Esophagus muscularis mucosa (tissue), 4 donors: ENCODE measurements at regions of chr22 and their contacts with region 1.

Region 1: GRCh38 chr22:23649071-23649501 is 17.0 kb upstream of the DRICH1 start:
- DNase-seq: no peak
- H3K4me3 ChIP-seq: no peak overlapping the region
- H3K27ac ChIP-seq: no peak overlapping the region
- H3K4me1 ChIP-seq: no peaks in the 10 kb centered on the region
- H3K27me3 ChIP-seq: no peaks in the 10 kb centered on the region
- CTCF ChIP-seq: no peak
- EP300 ChIP-seq: no peak
- POLR2A ChIP-seq: no peak

Region 2: DNA sequence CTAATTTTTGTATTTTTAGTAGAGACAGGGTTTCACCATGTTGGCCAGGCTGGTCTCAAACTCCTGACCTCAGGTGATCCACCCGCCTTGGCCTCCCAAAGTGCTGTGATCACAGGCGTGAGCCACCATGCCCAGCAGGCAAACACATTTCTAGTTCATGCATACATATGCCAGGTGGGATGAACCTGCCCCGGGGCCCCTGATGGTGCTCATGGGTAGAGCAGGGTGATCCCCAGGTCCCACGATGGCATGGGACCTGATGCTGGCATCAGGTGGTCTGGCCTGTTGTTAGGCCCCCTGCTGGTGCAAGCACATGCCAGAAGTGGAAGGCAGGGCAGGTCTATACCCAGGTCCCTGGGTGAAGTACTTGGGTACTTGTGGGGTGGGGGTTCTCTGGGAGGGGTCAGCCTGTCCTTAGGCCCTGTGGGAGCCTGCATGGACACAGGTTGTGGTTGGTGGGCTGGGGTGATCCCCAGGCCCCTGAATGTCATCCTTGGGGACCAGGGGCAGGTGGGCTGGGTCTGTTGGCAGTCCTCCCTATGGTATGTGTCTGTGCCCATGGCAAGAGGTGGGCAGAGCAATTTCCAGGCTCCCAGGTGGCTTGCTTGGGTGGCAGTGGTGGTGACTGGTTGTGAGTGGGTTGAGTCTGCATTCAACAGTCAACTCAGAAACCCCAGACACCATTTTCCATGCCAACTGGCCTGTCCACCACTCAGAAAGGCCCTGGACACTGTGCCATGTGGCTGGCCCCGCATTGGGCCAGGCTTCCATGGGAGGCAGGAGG is 32.1 kb after region 1 on chr22:
- intact Hi-C with region 1: loop called (anchors 1 kb)
- DNase-seq: no peak
- H3K4me3 ChIP-seq: no peak overlapping the region
- H3K27ac ChIP-seq: no peak overlapping the region
- H3K4me1 ChIP-seq: peaks cover 22 to 27% (median 23%) of the 10 kb centered on the region in 4 donors
- H3K27me3 ChIP-seq: no peaks in the 10 kb centered on the region
- CTCF ChIP-seq: no peak
- EP300 ChIP-seq: no peak
- POLR2A ChIP-seq: no peak